ENCODE measurements at regions of chr6 and their contacts with region 1.

Region 1: GRCh38 chr6:14754751-14755513 is 490.9 kb upstream of the JARID2 start:
- DNase-seq: peak; percentile 90
- H3K4me3 Mint-ChIP-seq: peak overlapping the region; percentile 61
- H3K27ac Mint-ChIP-seq: peak overlapping the region; percentile 100
- H3K4me1 Mint-ChIP-seq: peaks cover 73% of the 10 kb centered on the region
- H3K27me3 Mint-ChIP-seq: no peaks in the 10 kb centered on the region

Region 2: GRCh38 chr6:14743465-14744211 is 11.3 kb before region 1 on chr6:
- CTCF ChIA-PET with region 1: interaction called, 3 read pairs
- POLR2A ChIA-PET with region 1: interaction called, 84 read pairs
- intact Hi-C with region 1: loop called (anchors 1 kb)
- DNase-seq: peak; percentile 93
- H3K4me3 Mint-ChIP-seq: peak overlapping the region; percentile 58
- H3K27ac Mint-ChIP-seq: peak overlapping the region; percentile 98
- H3K4me1 Mint-ChIP-seq: peaks cover 83% of the 10 kb centered on the region
- H3K27me3 Mint-ChIP-seq: no peaks in the 10 kb centered on the region

Region 3: DNA sequence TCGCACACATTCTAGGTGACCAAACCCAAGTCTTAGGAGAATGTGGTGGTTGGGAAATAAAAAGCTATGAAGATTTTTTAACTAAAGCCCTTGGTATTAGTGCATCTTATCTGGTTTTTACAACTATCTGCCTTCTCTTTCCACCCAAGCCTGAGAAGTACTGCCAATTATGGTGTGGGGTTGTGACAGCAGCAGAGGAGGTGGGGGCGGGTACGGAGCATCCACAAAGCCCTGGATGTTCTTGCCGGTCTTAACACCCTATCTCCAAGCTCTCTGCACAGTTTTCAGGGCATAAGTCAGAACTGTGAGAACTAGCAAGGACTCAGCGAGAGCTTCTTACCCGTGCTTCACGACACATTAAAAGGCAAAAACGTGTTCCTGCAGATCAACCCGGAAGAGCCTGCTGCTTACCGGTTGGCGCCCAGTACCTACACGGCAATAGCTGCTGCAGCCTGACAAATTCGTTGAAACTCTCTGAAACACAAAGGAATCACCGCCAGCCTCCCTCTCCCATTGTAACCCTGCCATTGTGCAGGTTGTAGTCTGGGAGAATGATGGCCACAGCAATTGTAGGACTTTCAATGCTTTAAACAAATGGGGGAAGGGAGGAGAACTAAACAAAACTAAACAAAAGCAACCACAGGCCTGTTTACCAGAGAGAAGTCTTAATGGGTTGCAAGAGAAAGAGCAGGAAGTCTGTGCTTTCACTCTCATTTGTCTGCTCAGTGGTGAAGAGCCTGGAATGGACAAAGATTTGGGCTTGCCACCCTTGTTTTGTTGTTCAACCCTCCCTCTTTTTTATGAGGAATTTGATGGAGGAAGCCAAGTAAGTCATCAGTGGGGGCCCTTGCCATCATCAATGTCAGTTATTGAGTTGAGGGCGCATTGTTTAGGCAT is 29.9 kb after region 1 on chr6:
- CTCF ChIA-PET with region 1: no interaction called
- POLR2A ChIA-PET with region 1: interaction called, 3 read pairs
- intact Hi-C with region 1: loop called (anchors 1 kb)
- DNase-seq: peak; percentile 36
- H3K4me3 Mint-ChIP-seq: peak overlapping the region; percentile 49
- H3K27ac Mint-ChIP-seq: peak overlapping the region; percentile 71
- H3K4me1 Mint-ChIP-seq: peaks cover 36% of the 10 kb centered on the region
- H3K27me3 Mint-ChIP-seq: no peaks in the 10 kb centered on the region

Region 4: DNA sequence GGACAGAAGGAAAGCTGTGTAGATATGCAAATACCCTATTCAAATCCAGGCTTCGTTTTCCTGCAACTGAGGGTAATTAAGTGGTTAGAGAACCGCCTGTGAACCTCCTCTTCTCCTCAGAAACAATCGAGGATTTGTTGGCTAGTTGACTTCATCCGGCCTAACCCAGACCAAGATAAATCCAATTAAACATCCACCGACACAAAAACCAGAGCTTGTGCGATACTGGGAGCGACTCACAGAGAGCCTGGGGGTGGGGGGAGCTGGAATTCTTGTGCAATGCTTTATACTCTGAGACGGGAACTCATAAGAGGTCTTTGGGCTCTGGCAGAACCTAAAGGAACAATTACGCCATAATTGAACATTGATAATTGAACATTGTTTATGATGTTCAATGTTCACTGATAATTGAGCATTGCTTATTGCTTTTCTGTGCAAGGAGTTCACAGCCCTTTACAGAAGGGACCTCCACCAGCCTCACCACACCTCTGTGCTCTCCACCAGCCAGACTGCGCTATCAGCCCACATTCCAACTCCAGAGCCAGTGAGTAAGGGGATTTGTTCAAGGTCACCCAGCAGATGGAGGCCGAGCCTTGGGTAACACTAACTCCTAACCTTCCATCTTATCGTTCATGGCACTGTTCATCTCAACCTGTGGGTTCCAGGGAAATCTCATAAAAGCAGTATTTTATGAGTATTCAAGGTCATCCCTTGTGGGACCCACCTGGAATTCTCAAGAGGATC is 61.4 kb after region 1 on chr6:
- CTCF ChIA-PET with region 1: no interaction called
- POLR2A ChIA-PET with region 1: interaction called, 4 read pairs
- intact Hi-C with region 1: loop called (anchors 1 kb)
- DNase-seq: no peak
- H3K4me3 Mint-ChIP-seq: no peak overlapping the region
- H3K27ac Mint-ChIP-seq: no peak overlapping the region
- H3K4me1 Mint-ChIP-seq: peaks cover 22% of the 10 kb centered on the region
- H3K27me3 Mint-ChIP-seq: no peaks in the 10 kb centered on the region

Region 5: DNA sequence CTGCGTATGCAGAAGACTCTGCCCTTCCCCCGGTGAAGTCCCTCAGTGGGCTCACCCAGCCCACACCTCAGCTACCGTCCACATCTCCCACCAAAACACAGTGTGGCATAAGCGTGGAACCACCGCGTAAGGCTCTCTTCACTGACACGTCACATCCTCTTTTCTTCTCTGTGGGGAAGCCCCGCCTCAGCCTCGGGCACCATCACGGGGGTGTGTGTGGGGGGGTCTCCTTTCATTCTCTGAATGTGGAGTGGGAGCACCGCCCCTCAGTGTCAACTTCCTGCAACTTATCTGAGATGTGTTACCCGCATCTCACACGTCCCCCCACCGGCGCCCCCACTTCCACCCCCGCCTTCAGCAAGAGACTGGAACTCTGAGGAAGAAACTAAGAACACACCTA is 102.6 kb after region 1 on chr6:
- CTCF ChIA-PET with region 1: interaction called, 3 read pairs
- POLR2A ChIA-PET with region 1: interaction called, 33 read pairs
- intact Hi-C with region 1: loop called (anchors 1 kb)
- DNase-seq: peak; percentile 84
- H3K4me3 Mint-ChIP-seq: peak overlapping the region; percentile 56
- H3K27ac Mint-ChIP-seq: peak overlapping the region; percentile 95
- H3K4me1 Mint-ChIP-seq: peaks cover 48% of the 10 kb centered on the region
- H3K27me3 Mint-ChIP-seq: no peaks in the 10 kb centered on the region

Region 6: DNA sequence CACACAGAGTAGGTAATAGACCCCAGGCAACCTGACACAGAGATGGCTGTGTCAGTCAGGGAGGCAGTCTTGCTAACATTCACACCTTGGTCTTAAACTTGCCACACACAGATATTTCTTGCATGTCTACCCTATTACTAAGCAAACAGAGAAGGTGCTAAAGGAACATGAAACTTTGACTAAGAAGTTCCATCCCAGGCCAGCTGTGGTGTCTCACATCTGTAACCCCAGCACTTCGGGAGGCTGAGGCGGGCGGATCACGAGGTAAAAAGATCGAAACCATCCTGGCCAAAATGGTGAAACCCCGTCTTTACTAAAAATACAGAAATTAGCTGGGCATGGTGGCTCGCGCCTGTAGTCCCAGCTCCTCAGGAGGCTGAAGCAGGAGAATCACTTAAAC is 268.5 kb after region 1 on chr6:
- CTCF ChIA-PET with region 1: no interaction called
- POLR2A ChIA-PET with region 1: interaction called, 3 read pairs
- intact Hi-C with region 1: loop called (anchors 1 kb)
- DNase-seq: peak; percentile 89
- H3K4me3 Mint-ChIP-seq: peak overlapping the region; percentile 41
- H3K27ac Mint-ChIP-seq: peak overlapping the region; percentile 96
- H3K4me1 Mint-ChIP-seq: peaks cover 35% of the 10 kb centered on the region
- H3K27me3 Mint-ChIP-seq: peaks cover 3% of the 10 kb centered on the region

Region 7: DNA sequence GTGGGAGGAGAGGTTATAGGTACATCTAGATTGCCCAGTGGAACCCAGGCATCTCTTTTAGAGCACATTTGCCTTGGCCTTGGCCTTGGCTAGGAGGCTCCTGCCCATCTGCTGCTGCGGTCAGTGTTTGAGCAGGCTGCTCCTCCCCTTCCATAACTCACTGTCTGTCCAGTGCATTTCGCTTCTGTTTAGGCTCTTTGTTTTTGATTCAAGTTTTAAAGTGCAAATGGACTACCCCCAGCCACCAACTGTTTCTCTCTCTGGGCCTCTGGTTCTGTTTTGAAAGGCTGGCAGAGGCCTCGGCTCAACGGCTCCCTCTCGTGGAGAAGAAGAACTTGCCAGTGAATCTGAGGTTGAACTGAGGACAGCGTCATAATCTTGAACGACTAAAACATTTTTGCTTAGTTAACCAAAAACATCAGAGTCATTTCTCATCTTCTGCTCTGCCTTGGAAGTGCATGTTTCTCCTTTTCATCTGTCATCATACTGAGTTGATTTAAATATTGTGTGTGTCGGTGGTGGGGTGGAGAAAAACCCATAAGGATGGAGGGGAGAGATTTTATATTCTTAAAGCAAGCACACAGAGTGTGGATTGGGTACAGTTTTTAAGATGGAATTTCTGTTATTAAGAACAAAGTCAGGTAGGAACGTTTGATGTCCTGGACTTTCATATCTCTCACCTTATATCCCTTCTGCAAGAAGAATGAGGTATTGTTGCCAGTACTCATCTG is 736.5 kb after region 1 on chr6:
- CTCF ChIA-PET with region 1: no interaction called
- POLR2A ChIA-PET with region 1: no interaction called
- intact Hi-C with region 1: loop called (anchors 1 kb)
- DNase-seq: peak; percentile 84
- H3K4me3 Mint-ChIP-seq: no peak overlapping the region
- H3K27ac Mint-ChIP-seq: peak overlapping the region; percentile 76
- H3K4me1 Mint-ChIP-seq: peaks cover 35% of the 10 kb centered on the region
- H3K27me3 Mint-ChIP-seq: no peaks in the 10 kb centered on the region

Measured in activated CD4-positive, alpha-beta memory T cell treated with anti-CD3 and anti-CD28 coated beads for 36 hours (primary cell).